ENCODE measurements at regions of chr4 and their contacts with region 1.

Region 1: DNA sequence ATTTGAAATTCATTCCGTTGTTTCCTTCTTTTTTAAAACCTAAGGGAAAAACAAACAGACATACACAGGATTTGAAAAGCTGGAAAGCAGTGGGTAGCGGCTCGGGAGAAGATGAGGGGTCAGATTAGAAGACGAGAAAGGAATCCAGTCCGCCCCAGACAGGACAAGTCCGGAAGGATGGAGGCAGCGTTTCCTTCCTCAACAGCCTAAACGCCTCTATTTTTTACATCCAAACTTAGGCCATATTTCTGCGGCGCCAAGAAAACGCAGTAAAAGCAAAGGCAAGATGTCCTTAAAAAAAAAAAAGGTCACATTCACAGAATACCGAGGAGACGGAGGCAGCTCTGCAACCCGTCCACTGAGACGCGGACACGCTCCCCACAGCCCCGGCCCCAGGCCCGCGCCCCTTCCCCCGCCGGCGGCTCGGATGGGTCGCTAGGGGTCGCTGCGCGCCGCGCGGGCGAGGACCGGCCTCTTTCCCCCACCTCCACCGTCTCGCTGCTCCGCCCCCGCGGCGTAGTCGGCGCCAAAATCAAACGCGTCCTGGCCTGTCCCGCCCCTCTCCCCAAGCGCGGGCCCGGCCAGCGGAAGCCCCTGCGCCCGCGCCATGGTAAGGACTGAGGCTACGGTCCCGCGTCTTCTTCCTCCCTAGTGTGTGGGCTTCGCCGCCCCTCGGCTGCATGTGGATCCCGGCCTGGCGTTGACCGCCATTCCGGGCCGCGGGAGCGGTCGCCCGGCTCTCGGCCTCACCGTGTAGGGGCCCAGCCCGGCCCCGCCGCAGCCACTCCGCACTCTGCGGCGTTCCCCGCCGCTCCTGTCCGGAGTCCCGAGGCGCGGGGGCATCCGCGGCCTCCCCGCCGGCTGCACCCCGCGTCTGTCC is at the start of gene MND1:
- DNase-seq: peak; percentile 84
- H3K4me3 Mint-ChIP-seq: peak within 1 kb of the TSS; percentile 84
- H3K27ac Mint-ChIP-seq: peak within 1 kb of the TSS; percentile 16
- H3K4me1 Mint-ChIP-seq: peaks cover 33% of the 10 kb centered on the region
- H3K27me3 Mint-ChIP-seq: no peaks in the 10 kb centered on the region
- CTCF ChIP-seq: peak; percentile 98
- total RNA-seq, gene MND1: 4.8 and 9.7 TPM in 2 replicates

Region 2: DNA sequence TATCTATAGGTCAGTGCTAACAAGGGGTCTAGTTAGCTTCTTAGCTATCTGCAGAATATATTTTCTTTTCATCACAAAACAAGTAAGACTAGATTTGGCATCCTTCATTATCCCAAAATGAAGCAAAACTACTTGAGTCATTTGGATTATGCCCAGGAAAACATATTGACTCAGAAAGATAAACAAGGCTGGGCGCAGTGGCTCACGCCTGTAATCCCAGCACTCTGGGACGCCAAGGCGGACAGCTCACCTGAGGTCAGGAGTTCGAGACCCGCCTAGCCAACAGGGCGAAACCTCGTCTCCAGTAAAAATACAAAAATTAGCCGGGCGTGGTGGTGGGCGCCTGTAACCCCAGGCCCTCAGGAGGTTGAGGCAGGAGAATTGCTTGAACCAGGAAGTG is 17.9 kb before region 1 on chr4:
- CTCF ChIA-PET with region 1: interaction called, 12 read pairs
- POLR2A ChIA-PET with region 1: interaction called, 3 read pairs
- intact Hi-C with region 1: no loop called
- DNase-seq: peak; percentile 71
- H3K4me3 Mint-ChIP-seq: no peak overlapping the region
- H3K27ac Mint-ChIP-seq: no peak overlapping the region
- H3K4me1 Mint-ChIP-seq: no peaks in the 10 kb centered on the region
- H3K27me3 Mint-ChIP-seq: no peaks in the 10 kb centered on the region
- CTCF ChIP-seq: no peak

Region 3: DNA sequence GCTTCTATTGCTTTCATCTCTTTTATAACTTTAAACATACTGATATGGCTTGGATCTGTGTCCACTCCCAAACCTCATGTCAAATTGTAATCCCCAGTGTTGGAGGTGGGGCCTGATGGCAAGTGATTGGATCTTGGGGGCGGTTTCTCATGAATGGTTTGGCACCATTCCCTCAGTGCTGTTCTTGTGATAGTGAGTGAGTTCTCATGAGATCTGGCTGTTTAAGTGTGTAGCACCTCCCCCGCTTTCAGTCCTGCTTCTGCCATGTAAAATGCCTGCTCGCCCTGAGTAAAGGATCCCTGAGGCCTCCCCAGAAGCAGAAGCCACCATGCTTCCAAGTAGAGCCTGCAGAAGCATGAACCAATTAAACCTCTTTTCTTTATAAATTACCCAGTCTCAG is 17.8 kb after region 1 on chr4:
- CTCF ChIA-PET with region 1: interaction called, 21 read pairs
- POLR2A ChIA-PET with region 1: interaction called, 3 read pairs
- intact Hi-C with region 1: no loop called
- DNase-seq: no peak
- H3K4me3 Mint-ChIP-seq: no peak overlapping the region
- H3K27ac Mint-ChIP-seq: no peak overlapping the region
- H3K4me1 Mint-ChIP-seq: no peaks in the 10 kb centered on the region
- H3K27me3 Mint-ChIP-seq: no peaks in the 10 kb centered on the region
- CTCF ChIP-seq: no peak

Region 4: DNA sequence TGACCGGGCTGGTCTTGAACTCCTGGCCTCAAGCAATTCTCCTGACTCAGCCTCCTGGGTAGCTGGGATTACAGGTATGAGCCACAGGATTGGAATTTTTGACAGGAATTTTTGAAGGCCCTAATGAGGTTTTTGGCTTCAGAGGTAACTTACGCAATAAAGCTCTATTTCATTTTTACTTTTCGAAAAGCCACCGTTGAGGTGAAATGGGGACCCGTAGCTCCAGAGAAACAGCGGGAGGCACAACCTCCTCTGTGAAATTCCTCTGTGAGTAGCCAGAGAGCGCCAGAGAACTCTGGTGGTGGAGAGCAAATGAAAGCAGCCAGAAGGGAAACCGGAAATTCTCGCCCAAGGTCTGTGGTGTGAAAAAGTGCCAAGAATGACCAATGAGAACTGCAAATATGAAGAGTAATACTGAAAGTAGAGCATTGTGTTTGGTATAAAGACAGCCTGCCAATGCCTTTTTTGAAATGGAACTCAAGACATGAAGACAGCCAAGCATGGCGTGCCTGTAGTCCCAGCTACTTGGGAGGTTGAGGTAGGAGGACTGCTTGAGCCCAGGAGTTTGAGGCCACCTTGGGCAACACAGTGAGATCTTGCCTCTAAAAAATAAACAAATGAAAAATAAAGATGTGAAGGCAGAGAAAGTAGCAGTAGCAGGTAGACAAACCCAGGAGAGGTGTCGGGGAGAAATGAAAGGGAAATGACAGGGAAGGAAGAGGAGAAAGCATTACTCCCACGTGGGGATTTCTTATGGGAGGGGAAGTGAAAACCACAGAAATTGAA is 88.8 kb after region 1 on chr4:
- CTCF ChIA-PET with region 1: interaction called, 14 read pairs
- POLR2A ChIA-PET with region 1: interaction called, 9 read pairs
- intact Hi-C with region 1: loop called (anchors 1 kb)
- DNase-seq: peak; percentile 95
- H3K4me3 Mint-ChIP-seq: peak overlapping the region; percentile 57
- H3K27ac Mint-ChIP-seq: peak overlapping the region; percentile 72
- H3K4me1 Mint-ChIP-seq: peaks cover 7% of the 10 kb centered on the region
- H3K27me3 Mint-ChIP-seq: no peaks in the 10 kb centered on the region
- CTCF ChIP-seq: peak; percentile 53

Region 5: DNA sequence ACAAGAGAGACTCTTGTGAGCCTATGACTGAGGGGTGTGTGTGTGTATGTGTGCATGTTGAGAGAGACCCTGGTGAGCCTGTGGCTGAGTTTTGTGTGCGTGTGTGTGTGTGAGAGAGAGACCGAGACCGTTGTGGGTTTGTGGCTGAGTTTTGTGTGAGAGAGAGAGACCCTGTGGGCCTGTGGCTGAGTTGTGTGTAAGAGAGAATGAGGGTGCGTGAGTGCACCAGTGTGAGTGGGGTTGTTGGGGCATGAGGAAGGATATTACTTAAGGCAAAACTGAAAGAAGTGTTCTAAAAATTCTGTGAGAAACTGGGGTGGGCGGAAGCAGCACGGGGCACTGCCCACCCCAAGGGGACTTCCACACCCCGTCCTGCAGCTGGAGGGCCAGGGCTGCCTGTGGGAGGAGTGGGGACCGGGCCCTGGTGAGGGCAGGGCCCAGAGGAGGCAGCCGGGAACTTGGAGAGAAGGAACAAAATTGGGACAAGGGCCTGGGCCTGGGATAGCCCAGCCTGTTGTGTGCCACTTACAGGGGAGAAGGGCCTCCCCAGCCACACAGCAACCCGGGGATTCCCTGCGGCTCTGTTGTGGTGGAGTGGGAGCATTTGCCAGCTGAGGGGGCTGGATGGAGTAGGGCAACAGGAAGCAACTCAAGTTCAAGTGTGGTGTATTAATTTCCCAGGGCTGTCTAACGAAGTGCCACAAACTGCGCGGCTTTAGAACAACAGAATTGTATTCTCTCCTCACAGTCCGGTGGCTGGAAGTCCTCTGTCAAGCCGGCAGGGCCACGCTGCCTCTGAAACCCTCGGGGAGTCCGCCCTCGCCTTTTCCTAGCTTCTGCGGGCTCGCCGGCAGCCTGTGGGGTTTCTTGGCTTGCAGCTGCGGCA is 143.9 kb after region 1 on chr4:
- CTCF ChIA-PET with region 1: interaction called, 15 read pairs
- POLR2A ChIA-PET with region 1: interaction called, 21 read pairs
- intact Hi-C with region 1: no loop called
- DNase-seq: no peak
- H3K4me3 Mint-ChIP-seq: peak overlapping the region; percentile 44
- H3K27ac Mint-ChIP-seq: peak overlapping the region; percentile 93
- H3K4me1 Mint-ChIP-seq: peaks cover 53% of the 10 kb centered on the region
- H3K27me3 Mint-ChIP-seq: no peaks in the 10 kb centered on the region
- CTCF ChIP-seq: no peak